Left cardiac atrium (tissue), 4 donors: ENCODE measurements at regions of chr12 and their contacts with region 1.

Region 1: GRCh38 chr12:12916135-12916944 is 25.0 kb downstream of the GPRC5A start:
- DNase-seq: peak; percentile 81
- ATAC-seq: peak; percentile 90 to 96

Region 2: GRCh38 chr12:12975322-12976077 is 59.2 kb after region 1 on chr12:
- intact Hi-C with region 1: loop called (anchors 5 kb)
- DNase-seq: no peak
- ATAC-seq: peak in 1 of 2 donors; percentile 25

Region 3: DNA sequence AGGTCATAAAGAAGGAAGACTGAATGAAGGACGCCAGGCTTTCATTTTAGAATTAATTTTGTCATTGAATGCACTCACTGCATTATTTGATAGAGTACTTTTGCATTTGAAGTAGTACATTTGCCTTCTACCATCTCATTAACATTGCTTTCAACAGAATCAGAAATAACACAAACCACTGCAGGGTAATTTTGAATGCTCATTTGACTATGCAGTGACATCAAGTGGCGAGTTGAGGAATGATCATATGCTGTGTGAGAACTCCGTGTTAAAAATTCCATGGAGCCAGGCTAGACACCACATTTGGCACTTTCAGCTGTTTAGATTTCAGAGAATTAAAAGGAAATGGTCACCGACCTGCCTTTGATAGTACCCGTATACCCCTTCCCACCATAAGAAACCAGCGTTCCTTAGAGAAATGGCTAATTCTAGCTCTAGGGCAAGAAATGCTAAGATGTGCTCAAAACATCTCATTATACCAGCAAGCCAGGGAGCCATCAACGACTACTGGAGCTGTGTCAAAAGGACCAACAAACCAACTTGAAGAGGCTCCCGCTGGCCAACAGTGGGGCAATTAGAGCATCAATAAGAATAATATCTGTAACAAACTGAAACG is 67.2 kb after region 1 on chr12:
- intact Hi-C with region 1: loop called (anchors 5 kb)
- DNase-seq: no peak
- ATAC-seq: peak; percentile 41 to 70

Region 4: DNA sequence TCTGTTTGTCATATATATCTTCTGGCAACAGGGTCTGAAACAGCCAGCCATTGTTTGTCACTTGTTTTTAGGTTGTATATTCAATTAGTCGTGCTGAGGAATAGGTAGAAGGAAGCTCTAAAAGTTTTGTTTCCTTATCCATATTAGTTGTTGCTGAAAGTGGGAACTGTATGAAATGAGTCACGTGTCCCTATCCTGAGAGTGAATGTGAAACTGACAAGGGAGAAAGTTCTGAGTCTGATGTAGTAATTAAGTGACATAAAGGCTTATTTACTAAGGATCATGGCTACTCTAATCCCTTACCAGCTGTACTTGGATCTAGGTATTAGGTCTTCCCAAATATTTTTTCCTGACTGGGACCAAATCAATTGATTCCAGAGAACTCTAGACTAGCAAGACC is 144.2 kb after region 1 on chr12:
- intact Hi-C with region 1: no loop called
- DNase-seq: no peak
- ATAC-seq: no peak

Region 5: GRCh38 chr12:13094347-13094746 is 178.0 kb after region 1 on chr12:
- intact Hi-C with region 1: loop called (anchors 5 to 10 kb)
- DNase-seq: no peak
- ATAC-seq: no peak

Region 6: GRCh38 chr12:13211859-13212664 is 295.7 kb after region 1 on chr12:
- intact Hi-C with region 1: loop called (anchors 5 kb)
- DNase-seq: peak; percentile 35
- ATAC-seq: peak; percentile 25 to 42

Region 7: DNA sequence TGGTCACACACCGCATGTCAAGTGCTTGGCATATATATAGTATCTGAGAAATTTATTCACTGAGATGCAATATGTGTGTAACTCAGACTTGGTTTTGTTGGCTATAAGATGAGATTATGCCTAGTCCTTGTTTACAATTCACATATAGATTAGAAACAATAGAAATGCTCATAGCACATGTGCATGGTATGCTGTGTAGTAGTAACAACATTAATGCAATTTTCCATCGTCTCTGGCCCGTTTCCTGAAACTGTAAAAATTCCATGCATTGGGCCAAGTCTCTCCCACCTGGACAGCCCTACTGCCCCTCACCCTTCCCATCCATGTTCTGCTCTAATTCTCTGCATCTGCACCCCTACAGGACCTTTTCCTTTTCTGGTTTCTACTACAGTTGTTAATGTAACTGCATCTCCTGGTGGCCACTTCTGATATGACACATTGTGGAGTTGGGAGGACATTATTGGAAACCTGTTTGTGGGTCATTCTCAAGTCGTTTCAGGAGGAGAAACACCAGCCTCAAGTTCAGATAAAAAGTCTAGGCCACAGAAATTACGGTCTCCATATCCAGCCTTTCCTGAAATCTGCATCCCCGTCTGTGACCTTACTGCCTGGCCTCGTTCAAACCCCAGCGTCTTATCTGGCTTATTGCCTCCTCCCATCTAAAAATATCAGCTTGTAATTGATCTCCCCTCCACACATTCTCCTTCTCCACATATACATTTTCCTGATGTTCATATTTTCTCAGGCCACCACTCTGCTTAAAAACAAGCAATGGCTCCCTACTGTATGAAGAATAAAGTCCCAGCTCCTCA is 317.7 kb after region 1 on chr12:
- intact Hi-C with region 1: loop called in 1 of 2 experiments (anchors 5 kb)
- DNase-seq: peak; percentile 48
- ATAC-seq: peak; percentile 55 to 65